Activated B cell treated with CpG ODN at 0.5 μM for 24 hours (primary cell): ENCODE measurements at regions of chr1 and their contacts with region 1.

Region 1: GRCh38 chr1:110209715-110210603 is at the start of gene KCNC4:
- DNase-seq: peak; percentile 85
- ATAC-seq: peak; percentile 89
- H3K4me3 Mint-ChIP-seq: peak within 1 kb of the TSS; percentile 92
- H3K27ac Mint-ChIP-seq: peak within 1 kb of the TSS; percentile 90
- H3K4me1 Mint-ChIP-seq: peaks cover 32% of the 10 kb centered on the region
- H3K27me3 Mint-ChIP-seq: peaks cover 2% of the 10 kb centered on the region
- CTCF ChIP-seq: no peak
- total RNA-seq, gene KCNC4: 8.5 and 9.8 TPM in 2 replicates

Region 2: DNA sequence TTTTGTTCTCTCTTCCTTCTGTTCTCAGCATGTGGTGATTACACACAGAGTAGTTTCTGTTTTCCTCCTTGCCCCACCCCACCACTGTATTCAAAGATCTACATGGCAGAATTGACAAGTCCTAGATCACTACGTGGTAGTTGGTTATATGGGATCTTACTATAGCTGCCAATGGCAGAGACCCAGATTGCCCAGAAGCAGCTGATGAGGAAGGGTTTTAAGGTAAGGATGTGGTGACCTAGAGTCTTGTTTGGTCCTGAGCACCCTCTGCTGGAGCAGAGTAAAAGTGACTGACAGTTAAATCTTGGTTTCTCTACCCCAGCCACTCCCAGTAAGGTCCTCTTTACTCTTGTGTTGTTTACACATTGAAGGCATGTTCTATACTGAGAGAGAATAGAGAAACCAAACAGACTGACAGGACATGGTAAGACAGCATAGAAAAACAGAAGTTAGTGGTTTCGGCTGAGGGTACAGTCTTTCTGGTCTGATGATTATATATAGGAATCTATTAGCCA is 198.4 kb before region 1 on chr1:
- CTCF ChIA-PET with region 1: no interaction called
- POLR2A ChIA-PET with region 1: no interaction called
- intact Hi-C with region 1: no loop called
- DNase-seq: no peak
- ATAC-seq: peak; percentile 90
- H3K4me3 Mint-ChIP-seq: peak overlapping the region; percentile 75
- H3K27ac Mint-ChIP-seq: peak overlapping the region; percentile 99
- H3K4me1 Mint-ChIP-seq: peaks cover 37% of the 10 kb centered on the region
- H3K27me3 Mint-ChIP-seq: no peaks in the 10 kb centered on the region
- CTCF ChIP-seq: peak; percentile 55

Region 3: DNA sequence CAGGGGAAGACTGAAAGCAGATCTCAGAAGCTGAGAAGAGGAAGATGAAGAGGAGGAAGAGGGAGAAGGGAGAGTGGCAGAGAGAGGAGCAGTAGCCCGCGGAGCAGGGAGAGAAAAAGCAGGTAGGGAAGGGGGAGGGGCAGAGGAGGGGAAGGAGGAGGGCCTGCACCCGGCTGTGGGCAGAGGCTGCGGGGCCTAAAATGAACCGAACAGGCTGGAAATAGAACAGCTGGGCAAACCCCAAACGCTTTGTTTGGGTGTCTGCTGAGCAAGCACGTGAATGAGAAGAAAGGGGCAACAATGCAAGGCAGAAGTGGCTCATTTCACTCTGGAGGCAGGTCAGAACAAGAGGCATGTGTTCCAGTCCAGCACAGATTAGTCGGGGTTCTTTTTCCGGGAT is 33.6 kb after region 1 on chr1:
- CTCF ChIA-PET with region 1: interaction called, 26 read pairs
- POLR2A ChIA-PET with region 1: interaction called, 32 read pairs
- intact Hi-C with region 1: loop called (anchors 1 kb)
- DNase-seq: peak; percentile 30
- ATAC-seq: peak; percentile 89
- H3K4me3 Mint-ChIP-seq: peak overlapping the region; percentile 71
- H3K27ac Mint-ChIP-seq: peak overlapping the region; percentile 73
- H3K4me1 Mint-ChIP-seq: peaks cover 37% of the 10 kb centered on the region
- H3K27me3 Mint-ChIP-seq: no peaks in the 10 kb centered on the region
- CTCF ChIP-seq: no peak

Region 4: GRCh38 chr1:110312188-110313121 is 102.5 kb after region 1 on chr1:
- CTCF ChIA-PET with region 1: interaction called, 459 read pairs
- POLR2A ChIA-PET with region 1: interaction called, 23 read pairs
- intact Hi-C with region 1: loop called (anchors 1 kb)
- DNase-seq: peak; percentile 52
- ATAC-seq: peak; percentile 99
- H3K4me3 Mint-ChIP-seq: no peak overlapping the region
- H3K27ac Mint-ChIP-seq: no peak overlapping the region
- H3K4me1 Mint-ChIP-seq: peaks cover 3% of the 10 kb centered on the region
- H3K27me3 Mint-ChIP-seq: no peaks in the 10 kb centered on the region
- CTCF ChIP-seq: peak; percentile 43

Region 5: GRCh38 chr1:110407260-110408210 is 197.6 kb after region 1 on chr1 and contains the start of gene LAMTOR5:
- CTCF ChIA-PET with region 1: interaction called, 21 read pairs
- POLR2A ChIA-PET with region 1: interaction called, 9 read pairs
- intact Hi-C with region 1: loop called (anchors 1 kb)
- DNase-seq: peak; percentile 84
- ATAC-seq: peak; percentile 91
- H3K4me3 Mint-ChIP-seq: peak within 1 kb of the TSS; percentile 97
- H3K27ac Mint-ChIP-seq: peak within 1 kb of the TSS; percentile 96
- H3K4me1 Mint-ChIP-seq: peaks cover 26% of the 10 kb centered on the region
- H3K27me3 Mint-ChIP-seq: no peaks in the 10 kb centered on the region
- CTCF ChIP-seq: no peak
- total RNA-seq, gene LAMTOR5: 160 and 172 TPM in 2 replicates

Region 6: GRCh38 chr1:110460253-110461220 is 250.6 kb after region 1 on chr1:
- CTCF ChIA-PET with region 1: interaction called, 215 read pairs
- POLR2A ChIA-PET with region 1: interaction called, 23 read pairs
- intact Hi-C with region 1: loop called (anchors 1 kb)
- DNase-seq: peak; percentile 68
- ATAC-seq: peak; percentile 99
- H3K4me3 Mint-ChIP-seq: no peak overlapping the region
- H3K27ac Mint-ChIP-seq: no peak overlapping the region
- H3K4me1 Mint-ChIP-seq: no peaks in the 10 kb centered on the region
- H3K27me3 Mint-ChIP-seq: no peaks in the 10 kb centered on the region
- CTCF ChIP-seq: peak; percentile 96

Region 7: DNA sequence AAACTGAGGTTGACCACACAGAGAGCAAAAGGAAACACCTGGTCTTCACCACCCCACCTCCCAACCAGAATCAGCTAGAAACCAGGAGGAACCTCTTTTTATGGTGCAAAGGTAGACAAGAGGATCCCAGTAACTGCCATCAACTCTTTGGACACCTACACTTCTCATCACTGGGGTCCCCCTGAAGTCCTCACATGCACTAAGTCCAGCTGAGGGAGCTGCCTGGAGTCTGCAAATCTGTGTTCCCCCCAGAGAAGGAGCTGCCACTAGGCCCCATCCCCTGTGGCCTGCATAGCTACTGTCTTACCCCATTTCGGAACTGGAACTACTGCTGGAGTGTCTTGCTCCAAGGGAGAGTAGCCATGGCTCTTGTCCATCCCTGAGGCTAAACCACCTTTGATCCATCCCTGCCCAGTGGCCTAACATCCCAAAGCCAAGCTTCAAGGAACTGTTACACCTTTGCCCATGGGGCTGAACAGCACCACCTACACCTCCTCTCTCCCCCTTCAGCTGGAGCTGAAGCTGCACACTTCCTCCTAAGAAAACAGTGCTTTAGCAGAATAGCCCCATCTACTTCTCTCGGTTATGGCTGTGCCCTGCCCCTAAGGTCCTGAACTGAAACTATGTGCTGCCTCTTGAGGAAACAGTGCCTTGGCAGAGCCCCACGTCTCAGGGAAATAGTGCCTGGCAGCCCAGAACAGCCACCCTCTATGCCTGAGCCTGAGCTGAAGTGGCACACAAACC is 577.5 kb after region 1 on chr1:
- CTCF ChIA-PET with region 1: no interaction called
- POLR2A ChIA-PET with region 1: no interaction called
- intact Hi-C with region 1: loop called (anchors 5 kb)
- DNase-seq: peak; percentile 49
- ATAC-seq: peak; percentile 85
- H3K4me3 Mint-ChIP-seq: peak overlapping the region; percentile 70
- H3K27ac Mint-ChIP-seq: peak overlapping the region; percentile 95
- H3K4me1 Mint-ChIP-seq: peaks cover 70% of the 10 kb centered on the region
- H3K27me3 Mint-ChIP-seq: no peaks in the 10 kb centered on the region
- CTCF ChIP-seq: no peak